Right cardiac atrium (tissue), 5 donors: ENCODE measurements at regions of chr16 and their contacts with region 1.

Region 1: DNA sequence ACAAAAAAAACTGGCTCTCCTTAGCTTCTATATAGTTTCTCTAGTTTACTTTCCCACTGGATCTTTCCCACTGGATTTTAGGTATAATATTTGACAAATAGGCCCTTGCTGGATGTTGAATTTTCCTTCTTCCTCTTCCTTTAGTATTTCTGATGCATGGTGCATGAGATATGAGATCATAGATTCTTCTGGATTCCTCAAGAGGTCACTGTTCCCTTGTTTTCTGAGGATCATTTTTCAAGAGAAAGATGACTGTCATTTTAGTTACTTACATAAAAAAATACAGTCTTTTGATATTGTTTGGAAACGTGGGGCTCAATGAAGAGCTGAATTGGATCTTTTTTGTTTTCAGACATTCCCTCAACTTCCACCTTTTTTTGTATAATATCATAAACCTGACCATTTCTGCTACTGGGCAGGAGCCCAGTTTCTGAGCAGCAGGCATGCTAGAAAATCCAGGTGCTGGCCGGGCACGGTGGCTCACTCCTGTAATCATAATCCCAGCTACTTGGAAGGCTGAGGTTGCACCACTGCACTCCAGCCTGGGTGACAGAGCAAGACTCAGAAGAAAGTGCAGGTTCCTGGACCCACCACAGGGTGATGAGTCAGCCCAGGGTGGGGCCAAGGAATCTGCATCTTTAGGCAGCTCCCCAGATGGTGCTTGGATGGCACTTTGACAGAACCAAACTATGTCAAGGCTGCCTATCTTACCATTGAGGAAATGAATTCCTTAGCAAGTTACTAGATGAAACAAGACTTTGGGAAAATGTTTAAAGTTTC is 70.3 kb downstream of the SDR42E1 start:
- DNase-seq: no peak
- ATAC-seq: peak in 1 of 2 donors; percentile 32
- H3K4me3 ChIP-seq: no peak overlapping the region
- H3K27ac ChIP-seq: no peak overlapping the region
- H3K4me1 ChIP-seq: no peaks in the 10 kb centered on the region
- H3K27me3 ChIP-seq: no peaks in the 10 kb centered on the region

Region 2: DNA sequence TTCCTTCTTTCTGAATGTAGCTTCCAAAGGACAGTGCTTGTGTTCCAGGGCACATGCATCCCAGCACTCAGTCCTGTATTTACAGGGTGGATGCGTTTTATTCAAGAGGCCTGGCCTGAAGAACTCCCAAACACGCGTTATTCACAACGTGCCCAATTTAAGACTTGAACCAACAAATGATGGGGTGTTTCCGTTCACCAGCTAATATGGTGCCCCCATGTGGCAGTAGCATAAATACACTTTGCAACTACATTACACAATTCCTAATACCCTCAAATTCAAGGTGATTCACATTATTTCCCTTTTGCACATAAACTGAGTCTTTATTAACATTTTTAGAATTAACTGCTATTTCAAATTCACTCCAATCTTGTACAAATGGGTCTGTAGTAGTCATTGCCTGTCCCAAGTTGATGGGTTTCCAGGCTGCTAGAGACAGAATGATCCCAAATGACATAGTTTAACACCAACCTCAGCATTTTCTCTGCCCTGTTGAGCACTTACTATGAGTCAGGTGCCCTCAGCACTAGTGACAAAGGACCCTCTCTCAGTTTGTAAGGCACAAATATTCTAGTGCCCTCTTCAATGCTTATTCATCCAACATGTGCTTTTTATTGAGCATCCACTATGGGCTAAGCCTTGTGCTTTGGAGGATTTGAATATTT is 121.0 kb after region 1 on chr16:
- intact Hi-C with region 1: loop called in 1 of 4 experiments (anchors 10 kb)
- DNase-seq: no peak
- ATAC-seq: no peak
- H3K4me3 ChIP-seq: no peak overlapping the region
- H3K27ac ChIP-seq: no peak overlapping the region
- H3K4me1 ChIP-seq: no peaks in the 10 kb centered on the region
- H3K27me3 ChIP-seq: no peaks in the 10 kb centered on the region